IMR-90 (cell line): ENCODE measurements at regions of chrX and their contacts with region 1.

Region 1: GRCh38 chrX:53281321-53281822 is at the start of gene IQSEC2:
- DNase-seq: peak; percentile 77
- ATAC-seq: peak; percentile 88
- H3K4me3 ChIP-seq: peak within 1 kb of the TSS; percentile 43
- H3K27ac ChIP-seq: peak within 1 kb of the TSS; percentile 77
- H3K4me1 ChIP-seq: peaks cover 7% of the 10 kb centered on the region
- H3K27me3 ChIP-seq: peaks cover 11% of the 10 kb centered on the region; the same call in 1 of the 2 replicates
- CTCF ChIP-seq: no peak
- POLR2A ChIP-seq: no peak
- RAD21 ChIP-seq: no peak
- total RNA-seq, gene IQSEC2: 2.5 and 3.9 TPM in 2 replicates

Region 2: DNA sequence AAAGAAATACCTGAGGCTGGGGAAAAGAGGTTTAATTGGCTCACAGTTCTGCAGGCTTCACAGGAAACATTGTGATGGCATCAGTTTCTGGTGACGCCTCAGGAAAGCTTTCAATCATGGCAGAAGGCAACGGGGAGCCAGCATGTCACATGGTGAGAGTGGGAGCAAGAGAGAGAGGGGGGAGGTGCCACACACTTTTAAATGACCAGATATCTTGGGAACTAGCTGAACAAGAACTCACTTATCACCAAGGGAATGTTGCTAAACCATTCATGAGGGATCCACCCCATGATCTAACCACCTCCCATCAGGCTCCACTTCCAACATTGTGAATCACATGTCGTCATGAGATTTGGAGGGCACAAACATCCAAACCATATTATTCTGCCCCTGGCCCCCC is 276.1 kb before region 1 on chrX:
- CTCF ChIA-PET with region 1: no interaction called
- POLR2A ChIA-PET with region 1: no interaction called
- dilution Hi-C with region 1: no loop called
- in situ Hi-C with region 1: no loop called
- intact Hi-C with region 1: no loop called
- DNase-seq: no peak
- ATAC-seq: no peak
- H3K4me3 ChIP-seq: no peak overlapping the region
- H3K27ac ChIP-seq: no peak overlapping the region
- H3K4me1 ChIP-seq: no peaks in the 10 kb centered on the region
- H3K27me3 ChIP-seq: peaks cover 45% of the 10 kb centered on the region
- CTCF ChIP-seq: no peak
- POLR2A ChIP-seq: no peak
- RAD21 ChIP-seq: no peak

Region 3: DNA sequence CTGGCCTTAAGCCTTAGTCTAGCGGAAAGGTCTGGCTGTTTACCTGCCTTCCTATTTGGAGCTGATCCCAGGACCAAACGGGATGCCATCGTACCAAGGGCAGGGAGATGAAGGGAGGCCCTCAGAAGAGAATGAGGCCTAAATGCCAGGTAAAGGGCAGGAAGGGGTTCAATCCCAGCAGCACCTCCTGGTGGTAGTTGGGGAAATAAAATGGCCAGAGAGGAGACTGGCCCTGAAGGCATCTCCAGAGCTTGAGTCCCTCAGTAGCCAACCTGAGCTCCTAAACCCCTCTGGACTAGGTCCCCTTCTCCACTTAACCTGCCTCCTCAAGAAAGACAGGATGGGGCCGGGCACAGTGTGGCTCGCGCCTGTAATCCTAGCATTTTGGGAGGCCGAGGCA is 110.0 kb before region 1 on chrX:
- CTCF ChIA-PET with region 1: no interaction called
- POLR2A ChIA-PET with region 1: no interaction called
- dilution Hi-C with region 1: no loop called
- in situ Hi-C with region 1: no loop called
- intact Hi-C with region 1: no loop called
- DNase-seq: no peak
- ATAC-seq: no peak
- H3K4me3 ChIP-seq: no peak overlapping the region
- H3K27ac ChIP-seq: no peak overlapping the region
- H3K4me1 ChIP-seq: no peaks in the 10 kb centered on the region
- H3K27me3 ChIP-seq: peaks cover 1% of the 10 kb centered on the region; the same call in 1 of the 2 replicates
- CTCF ChIP-seq: no peak
- POLR2A ChIP-seq: no peak
- RAD21 ChIP-seq: no peak

Region 4: GRCh38 chrX:53224860-53225797 is 56.2 kb before region 1 on chrX and contains the start of gene KDM5C:
- CTCF ChIA-PET with region 1: no interaction called
- POLR2A ChIA-PET with region 1: no interaction called
- dilution Hi-C with region 1: no loop called
- in situ Hi-C with region 1: no loop called
- intact Hi-C with region 1: no loop called
- DNase-seq: peak; percentile 94
- ATAC-seq: peak; percentile 82
- H3K4me3 ChIP-seq: peak within 1 kb of the TSS; percentile 75
- H3K27ac ChIP-seq: peak within 1 kb of the TSS; percentile 93
- H3K4me1 ChIP-seq: peaks cover 13% of the 10 kb centered on the region
- H3K27me3 ChIP-seq: peaks cover 2% of the 10 kb centered on the region; the same call in 1 of the 2 replicates
- CTCF ChIP-seq: no peak
- POLR2A ChIP-seq: peak; percentile 93
- RAD21 ChIP-seq: no peak
- total RNA-seq, gene KDM5C: 65.8 and 84.6 TPM in 2 replicates

Region 5: DNA sequence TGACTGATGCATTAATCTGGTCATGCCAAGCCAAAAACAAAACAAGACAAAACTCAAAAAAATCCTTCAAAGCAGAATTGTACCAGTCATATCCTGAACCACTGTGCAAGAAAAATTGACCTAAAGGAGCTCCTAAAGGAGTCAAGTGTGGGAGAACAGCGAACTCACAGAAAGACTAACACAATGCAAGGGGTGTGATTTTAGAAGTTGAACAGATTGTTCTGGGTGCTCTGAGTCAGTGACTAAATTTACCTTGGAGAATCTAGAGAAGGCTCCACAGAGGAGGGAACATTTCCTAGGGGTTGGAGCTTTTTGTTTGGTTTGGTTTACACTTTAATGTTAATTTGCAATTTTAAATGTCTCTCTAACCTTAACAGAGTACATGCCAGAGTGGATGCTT is 811.8 kb after region 1 on chrX:
- CTCF ChIA-PET with region 1: no interaction called
- POLR2A ChIA-PET with region 1: interaction called, 11 read pairs
- dilution Hi-C with region 1: no loop called
- in situ Hi-C with region 1: no loop called
- intact Hi-C with region 1: no loop called
- DNase-seq: no peak
- ATAC-seq: no peak
- H3K4me3 ChIP-seq: no peak overlapping the region
- H3K27ac ChIP-seq: no peak overlapping the region
- H3K4me1 ChIP-seq: no peaks in the 10 kb centered on the region
- H3K27me3 ChIP-seq: no peaks in the 10 kb centered on the region
- CTCF ChIP-seq: no peak
- POLR2A ChIP-seq: no peak
- RAD21 ChIP-seq: no peak